GM13977 (cell line): ENCODE measurements at regions of chr2 and their contacts with region 1.

Region 1: GRCh38 chr2:100262555-100263320 is 59.6 kb downstream of the LONRF2 start:
- DNase-seq: peak; percentile 71
- CTCF ChIP-seq: peak; percentile 84

Region 2: DNA sequence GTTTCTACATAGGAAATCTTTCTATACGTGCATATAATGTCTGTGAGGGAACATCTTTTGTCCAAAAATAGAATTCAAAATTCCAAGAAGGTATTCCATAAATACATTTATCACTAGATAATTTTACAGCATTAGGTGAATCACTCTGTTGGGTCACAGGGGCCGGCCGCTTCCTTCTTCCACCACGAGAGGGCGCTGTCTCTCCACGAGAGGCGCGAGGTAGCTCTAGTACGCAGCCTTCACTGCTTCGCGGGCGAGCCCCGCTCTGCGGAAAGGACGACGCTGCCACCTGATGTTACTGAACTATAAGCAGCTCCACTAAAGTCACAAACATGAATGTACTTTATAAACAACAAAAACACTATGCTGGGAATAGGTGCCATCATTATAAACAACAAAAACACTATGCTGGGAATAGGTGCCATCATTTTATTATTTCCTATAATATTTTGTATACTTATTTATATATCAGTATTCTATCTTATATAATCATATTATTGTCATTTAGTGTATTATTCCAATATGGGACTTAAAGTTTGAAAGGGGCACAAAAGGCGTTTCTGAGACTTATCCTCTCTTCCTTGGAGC is 703.6 kb before region 1 on chr2:
- in situ Hi-C with region 1: loop called (anchors 25 kb)
- DNase-seq: peak; percentile 82
- CTCF ChIP-seq: peak; percentile 96

Region 3: DNA sequence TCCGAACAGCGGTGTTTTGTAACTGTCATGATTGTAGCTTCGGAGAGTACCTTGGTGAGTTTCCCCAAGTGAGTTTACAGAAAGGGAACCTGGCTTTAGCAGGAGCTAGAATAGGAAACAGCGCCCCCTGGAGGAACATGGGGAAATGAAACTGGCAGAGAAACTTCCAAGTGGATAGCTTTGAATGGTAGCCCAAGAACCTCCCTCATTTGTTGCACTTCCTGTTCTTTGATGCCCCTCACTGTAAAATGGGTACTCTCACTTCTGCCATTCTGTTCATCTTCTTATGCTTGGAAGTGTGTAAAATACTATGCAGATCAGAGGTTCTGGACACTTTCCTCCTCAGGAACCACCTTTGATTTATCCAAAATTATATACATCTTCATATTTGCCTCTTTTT is 118.5 kb after region 1 on chr2:
- in situ Hi-C with region 1: loop called (anchors 10 kb)
- DNase-seq: peak; percentile 63
- CTCF ChIP-seq: peak; percentile 83